ENCODE measurements at regions of chr12 and their contacts with region 1.

Region 1: DNA sequence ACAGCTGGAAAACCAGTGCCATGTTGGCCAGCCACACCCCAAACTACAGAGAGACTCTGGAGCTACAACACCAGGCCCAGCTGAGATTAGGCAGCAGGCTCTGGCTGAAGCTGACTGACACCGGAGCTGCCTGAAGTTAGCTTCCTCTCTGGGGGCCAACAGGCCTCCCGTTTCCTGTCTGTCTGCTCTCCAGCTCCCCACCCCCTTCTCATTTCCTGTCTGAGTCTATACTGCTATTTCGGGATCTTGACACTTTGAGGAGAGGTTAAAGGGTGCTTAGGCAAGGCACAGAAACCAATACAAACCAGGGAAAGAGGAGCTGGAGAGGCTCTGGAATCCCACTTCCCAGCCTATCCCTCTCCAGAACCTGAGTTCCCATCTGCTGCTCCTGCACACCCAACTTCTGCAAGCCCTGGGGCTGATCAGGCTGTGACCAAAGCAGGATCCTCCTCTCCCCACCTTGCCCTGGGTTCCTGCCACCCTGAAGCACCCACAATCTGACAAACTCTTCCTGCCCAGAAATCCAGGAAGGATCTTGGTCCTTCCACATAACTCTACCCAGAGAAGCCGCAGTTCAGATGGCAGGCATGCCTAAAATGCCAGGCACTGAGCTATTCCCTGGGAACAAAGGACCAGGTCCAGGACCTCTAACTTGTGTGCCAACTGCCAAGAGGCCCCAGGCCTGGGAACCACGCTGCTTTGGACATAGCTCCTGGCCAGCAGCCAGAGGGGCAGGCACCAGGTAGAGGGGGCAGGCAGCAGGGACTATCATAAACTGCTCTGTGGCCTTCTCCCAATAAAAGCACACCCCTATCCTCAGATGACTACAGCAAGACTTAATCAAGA is 39.9 kb downstream of the PRPF40B start:
- DNase-seq: peak; percentile 65
- H3K4me3 Mint-ChIP-seq: peak overlapping the region; percentile 66
- H3K27ac Mint-ChIP-seq: peak overlapping the region; percentile 91
- H3K4me1 Mint-ChIP-seq: peaks cover 59% of the 10 kb centered on the region
- H3K27me3 Mint-ChIP-seq: no peaks in the 10 kb centered on the region

Region 2: DNA sequence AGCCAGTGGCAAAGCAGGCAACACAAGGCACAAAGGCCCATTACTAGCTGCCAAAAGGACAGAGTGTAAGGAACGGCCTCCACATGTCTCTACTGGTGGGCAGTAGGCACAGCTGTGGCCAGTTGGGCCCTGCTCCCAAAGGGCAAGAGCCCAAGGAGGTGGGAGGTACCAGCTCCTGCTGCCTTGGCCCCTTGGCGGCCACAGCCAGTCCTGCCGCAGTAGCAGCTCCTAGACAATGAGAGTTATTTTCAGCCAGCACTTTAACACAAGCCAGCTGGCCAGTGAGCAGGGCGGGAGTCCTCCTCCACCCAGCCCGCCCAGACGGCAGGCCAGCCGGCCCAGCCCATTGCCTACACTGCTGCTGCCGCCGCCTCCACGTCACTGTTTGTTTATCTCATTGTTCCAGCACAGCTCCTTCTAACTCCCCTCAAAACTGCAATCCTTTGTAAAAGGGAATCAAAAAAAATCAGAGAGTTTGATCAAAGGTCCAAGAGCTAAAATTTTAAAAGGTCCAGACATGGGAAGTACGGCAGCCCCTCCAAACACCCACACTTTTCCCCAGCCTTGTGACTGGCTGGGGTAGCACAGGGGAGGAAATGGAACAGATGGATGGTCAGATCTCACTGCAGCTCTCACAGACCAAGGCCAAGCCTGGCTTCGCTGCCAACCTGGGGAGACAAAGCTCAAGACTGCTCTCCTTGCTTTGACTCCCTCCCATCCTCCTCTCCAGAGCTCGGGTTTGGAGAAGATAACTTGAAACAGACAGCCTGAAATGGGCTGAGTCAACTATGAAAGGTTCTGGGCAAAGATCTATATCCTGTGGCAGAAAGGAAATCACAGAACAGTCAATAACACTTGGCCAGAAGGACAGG is 10.5 kb after region 1 on chr12:
- intact Hi-C with region 1: loop called (anchors 1 kb)
- DNase-seq: no peak
- H3K4me3 Mint-ChIP-seq: peak overlapping the region; percentile 31
- H3K27ac Mint-ChIP-seq: peak overlapping the region; percentile 71
- H3K4me1 Mint-ChIP-seq: peaks cover 74% of the 10 kb centered on the region
- H3K27me3 Mint-ChIP-seq: no peaks in the 10 kb centered on the region